ENCODE measurements at regions of chr2 and their contacts with region 1.

Region 1: GRCh38 chr2:209423562-209424198 is at the start of gene MAP2:
- DNase-seq: peak; percentile 91
- ATAC-seq: peak; percentile 96
- H3K4me3 ChIP-seq: peak within 1 kb of the TSS; percentile 50 to 73 (median 67)
- H3K4me3 Mint-ChIP-seq: peak within 1 kb of the TSS; percentile 93
- H3K27ac ChIP-seq: peak within 1 kb of the TSS in 1 of 2 donors; percentile 46
- H3K27ac Mint-ChIP-seq: peak within 1 kb of the TSS; percentile 64
- H3K4me1 ChIP-seq: peaks cover 17 to 18% of the 10 kb centered on the region in 2 donors
- H3K4me1 Mint-ChIP-seq: peaks cover 23% of the 10 kb centered on the region
- H3K27me3 ChIP-seq: peaks cover 0 to 3% (median 0%) of the 10 kb centered on the region in 4 experiments
- H3K27me3 Mint-ChIP-seq: peaks cover 21% of the 10 kb centered on the region
- CTCF ChIP-seq: peak; percentile 91
- total RNA-seq, gene MAP2: 3.0 and 3.1 TPM in 2 replicates

Region 2: DNA sequence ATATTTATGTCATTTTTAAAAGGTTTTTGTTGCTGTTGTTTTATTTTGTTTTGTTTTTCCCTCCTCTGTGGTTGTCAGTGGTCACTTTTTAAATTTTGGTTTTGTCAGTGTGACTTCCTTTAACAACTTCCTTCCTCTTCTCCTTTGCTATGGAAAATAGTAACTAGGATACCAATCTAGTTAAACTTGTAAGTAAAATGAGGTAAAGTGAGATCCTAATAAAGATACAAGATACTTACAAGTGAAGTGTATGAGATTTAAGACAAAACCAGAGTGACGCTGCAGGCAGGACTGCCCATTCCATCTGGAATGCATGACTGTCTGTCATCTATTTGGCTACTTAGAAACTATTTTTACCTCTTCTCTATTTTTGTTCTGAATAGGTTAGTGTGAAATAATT is 1924.6 kb before region 1 on chr2:
- CTCF ChIA-PET with region 1: no interaction called
- POLR2A ChIA-PET with region 1: no interaction called
- intact Hi-C with region 1: no loop called
- DNase-seq: no peak
- ATAC-seq: no peak
- H3K4me3 ChIP-seq: no peak overlapping the region
- H3K4me3 Mint-ChIP-seq: no peak overlapping the region
- H3K27ac ChIP-seq: no peak overlapping the region
- H3K27ac Mint-ChIP-seq: peak overlapping the region; percentile 33
- H3K4me1 ChIP-seq: peaks cover 51 to 52% of the 10 kb centered on the region in 2 donors
- H3K4me1 Mint-ChIP-seq: peaks cover 52% of the 10 kb centered on the region
- H3K27me3 ChIP-seq: no peaks in the 10 kb centered on the region
- H3K27me3 Mint-ChIP-seq: no peaks in the 10 kb centered on the region
- CTCF ChIP-seq: no peak

Region 3: GRCh38 chr2:209334198-209335017 is 89.3 kb before region 1 on chr2:
- CTCF ChIA-PET with region 1: interaction called, 32 read pairs
- POLR2A ChIA-PET with region 1: no interaction called
- intact Hi-C with region 1: loop called (anchors 5 kb)
- DNase-seq: peak; percentile 63
- ATAC-seq: peak; percentile 56
- H3K4me3 ChIP-seq: no peak overlapping the region
- H3K4me3 Mint-ChIP-seq: no peak overlapping the region
- H3K27ac ChIP-seq: no peak overlapping the region
- H3K27ac Mint-ChIP-seq: no peak overlapping the region
- H3K4me1 ChIP-seq: peaks cover 0 to 3% of the 10 kb centered on the region in 2 donors
- H3K4me1 Mint-ChIP-seq: no peaks in the 10 kb centered on the region
- H3K27me3 ChIP-seq: no peaks in the 10 kb centered on the region
- H3K27me3 Mint-ChIP-seq: peaks cover 4% of the 10 kb centered on the region
- CTCF ChIP-seq: peak; percentile 93

Region 4: GRCh38 chr2:209476367-209477191 is 52.9 kb after region 1 on chr2:
- CTCF ChIA-PET with region 1: no interaction called
- POLR2A ChIA-PET with region 1: no interaction called
- intact Hi-C with region 1: no loop called
- DNase-seq: no peak
- ATAC-seq: no peak
- H3K4me3 ChIP-seq: no peak overlapping the region
- H3K4me3 Mint-ChIP-seq: no peak overlapping the region
- H3K27ac ChIP-seq: no peak overlapping the region
- H3K27ac Mint-ChIP-seq: no peak overlapping the region
- H3K4me1 ChIP-seq: no peaks in the 10 kb centered on the region
- H3K4me1 Mint-ChIP-seq: no peaks in the 10 kb centered on the region
- H3K27me3 ChIP-seq: no peaks in the 10 kb centered on the region
- H3K27me3 Mint-ChIP-seq: peaks cover 3% of the 10 kb centered on the region
- CTCF ChIP-seq: no peak

Region 5: DNA sequence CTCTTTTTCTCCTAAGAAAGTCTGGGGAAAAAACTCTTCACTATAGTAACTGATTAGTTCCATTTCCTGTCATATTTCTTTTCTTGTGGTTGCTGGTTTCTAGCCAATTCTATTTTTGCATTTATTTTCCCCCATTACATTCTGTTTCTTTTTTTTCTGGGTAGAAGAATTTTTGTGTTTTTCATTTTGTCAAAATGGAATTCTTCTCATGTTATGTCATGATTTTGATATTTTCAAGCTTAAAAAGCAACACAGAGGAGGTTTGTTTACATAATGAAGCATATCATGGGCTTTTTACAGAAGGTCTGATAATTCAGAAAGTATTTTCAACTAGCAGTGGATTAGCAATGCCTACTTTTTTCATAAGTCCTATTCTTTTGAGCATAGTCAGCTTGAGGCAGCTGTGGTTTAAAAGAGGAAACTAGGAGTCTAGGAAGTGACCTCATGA is 102.2 kb after region 1 on chr2:
- CTCF ChIA-PET with region 1: interaction called, 11 read pairs
- POLR2A ChIA-PET with region 1: no interaction called
- intact Hi-C with region 1: loop called (anchors 2 kb)
- DNase-seq: peak; percentile 19
- ATAC-seq: peak; percentile 21
- H3K4me3 ChIP-seq: peak overlapping the region in 4 of 5 experiments; percentile 28 to 59 (median 42)
- H3K4me3 Mint-ChIP-seq: peak overlapping the region; percentile 74
- H3K27ac ChIP-seq: peak overlapping the region; percentile 67 to 76
- H3K27ac Mint-ChIP-seq: peak overlapping the region; percentile 80
- H3K4me1 ChIP-seq: peaks cover 37 to 42% of the 10 kb centered on the region in 2 donors
- H3K4me1 Mint-ChIP-seq: peaks cover 41% of the 10 kb centered on the region
- H3K27me3 ChIP-seq: no peaks in the 10 kb centered on the region
- H3K27me3 Mint-ChIP-seq: no peaks in the 10 kb centered on the region
- CTCF ChIP-seq: no peak

Region 6: DNA sequence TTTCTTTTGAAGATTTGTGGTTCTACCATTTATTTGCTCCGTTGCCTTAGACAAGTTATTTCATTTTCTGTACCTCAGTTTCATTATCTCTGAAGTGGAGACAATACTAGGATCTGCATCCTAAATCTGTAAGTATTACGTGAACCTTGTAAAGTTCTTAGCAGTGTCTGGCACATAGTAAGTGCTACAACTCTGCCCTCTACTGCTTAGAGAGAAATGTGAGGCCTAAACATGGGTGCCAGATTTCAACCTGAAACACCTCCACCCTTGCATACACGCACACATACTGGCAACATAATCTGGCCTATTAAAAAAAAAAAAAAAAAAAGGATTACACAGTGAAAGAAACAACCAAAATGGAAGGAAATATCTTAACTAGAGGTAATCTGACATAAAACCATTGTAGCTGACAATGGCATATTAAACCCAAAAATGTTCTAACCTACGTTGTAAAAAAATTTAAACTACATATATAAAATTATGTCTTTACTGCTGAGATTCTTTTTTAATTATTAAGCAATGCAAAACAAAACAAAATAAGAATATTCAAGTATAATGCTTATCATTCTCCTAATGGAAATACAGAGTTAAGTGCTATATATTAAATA is 132.8 kb after region 1 on chr2:
- CTCF ChIA-PET with region 1: interaction called, 14 read pairs
- POLR2A ChIA-PET with region 1: no interaction called
- intact Hi-C with region 1: loop called (anchors 5 kb)
- DNase-seq: peak; percentile 50
- ATAC-seq: no peak
- H3K4me3 ChIP-seq: no peak overlapping the region
- H3K4me3 Mint-ChIP-seq: no peak overlapping the region
- H3K27ac ChIP-seq: no peak overlapping the region
- H3K27ac Mint-ChIP-seq: no peak overlapping the region
- H3K4me1 ChIP-seq: no peaks in the 10 kb centered on the region
- H3K4me1 Mint-ChIP-seq: peaks cover 5% of the 10 kb centered on the region
- H3K27me3 ChIP-seq: no peaks in the 10 kb centered on the region
- H3K27me3 Mint-ChIP-seq: no peaks in the 10 kb centered on the region
- CTCF ChIP-seq: peak; percentile 58

Region 7: GRCh38 chr2:209577376-209578357 is 154.0 kb after region 1 on chr2:
- CTCF ChIA-PET with region 1: interaction called, 10 read pairs
- POLR2A ChIA-PET with region 1: no interaction called
- intact Hi-C with region 1: loop called (anchors 2 kb)
- DNase-seq: peak; percentile 30
- ATAC-seq: no peak
- H3K4me3 ChIP-seq: no peak overlapping the region
- H3K4me3 Mint-ChIP-seq: no peak overlapping the region
- H3K27ac ChIP-seq: no peak overlapping the region
- H3K27ac Mint-ChIP-seq: no peak overlapping the region
- H3K4me1 ChIP-seq: peaks cover 6% of the 10 kb centered on the region in 2 donors
- H3K4me1 Mint-ChIP-seq: peaks cover 11% of the 10 kb centered on the region
- H3K27me3 ChIP-seq: no peaks in the 10 kb centered on the region
- H3K27me3 Mint-ChIP-seq: no peaks in the 10 kb centered on the region
- CTCF ChIP-seq: peak; percentile 76

Region 8: DNA sequence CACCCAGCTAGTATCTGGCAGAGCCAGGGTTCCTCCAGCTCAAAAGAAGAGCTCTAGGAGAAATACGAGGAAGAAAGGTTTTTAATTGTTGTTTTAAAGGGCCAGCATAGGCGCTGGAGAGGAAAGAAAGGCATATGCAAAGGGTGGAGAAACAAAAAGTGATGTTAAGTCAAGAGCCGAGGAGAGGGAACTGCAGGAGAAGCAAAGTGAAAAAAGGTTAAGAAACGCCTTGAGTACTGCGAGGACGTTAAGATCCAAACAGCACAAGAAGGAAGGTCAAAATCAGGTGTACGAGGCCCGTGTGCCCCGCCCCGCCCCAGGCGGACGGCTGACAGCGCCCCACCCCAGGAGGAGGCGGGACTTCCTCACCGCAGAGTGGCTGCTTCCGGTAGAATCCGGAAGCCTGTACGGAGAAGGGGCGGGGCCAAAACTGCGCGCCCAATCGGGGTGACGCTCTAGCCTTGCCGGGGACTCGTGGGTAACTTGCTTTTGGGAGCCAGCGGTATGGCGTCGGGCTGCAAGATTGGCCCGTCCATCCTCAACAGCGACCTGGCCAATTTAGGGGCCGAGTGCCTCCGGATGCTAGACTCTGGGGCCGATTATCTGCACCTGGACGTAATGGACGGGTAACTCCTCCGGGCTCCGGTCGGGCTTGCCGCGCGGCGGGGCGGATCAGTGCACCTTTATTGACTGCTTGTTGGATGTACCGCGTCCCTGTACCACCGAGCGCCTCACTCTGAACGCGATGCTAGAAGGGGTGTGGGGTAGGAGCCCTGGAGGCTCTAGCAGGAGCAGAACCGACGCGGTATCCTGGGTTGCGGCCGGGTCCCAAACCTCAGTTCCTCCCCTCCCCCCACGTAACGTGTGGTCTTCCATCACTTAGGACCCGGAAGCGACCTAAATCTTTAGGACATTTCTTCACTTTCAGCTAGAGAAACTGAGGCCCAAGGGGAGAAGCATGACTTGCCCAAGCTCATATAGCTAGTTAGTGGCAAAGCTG is 578.8 kb after region 1 on chr2 and contains the start of gene RPE:
- CTCF ChIA-PET with region 1: no interaction called
- POLR2A ChIA-PET with region 1: no interaction called
- intact Hi-C with region 1: loop called (anchors 1 kb)
- DNase-seq: peak; percentile 97
- ATAC-seq: peak; percentile 99
- H3K4me3 ChIP-seq: peak within 1 kb of the TSS; percentile 79 to 96 (median 93)
- H3K4me3 Mint-ChIP-seq: peak within 1 kb of the TSS; percentile 89
- H3K27ac ChIP-seq: peak within 1 kb of the TSS; percentile 68 to 88
- H3K27ac Mint-ChIP-seq: peak within 1 kb of the TSS; percentile 92
- H3K4me1 ChIP-seq: peaks cover 28 to 33% of the 10 kb centered on the region in 2 donors
- H3K4me1 Mint-ChIP-seq: peaks cover 45% of the 10 kb centered on the region
- H3K27me3 ChIP-seq: no peaks in the 10 kb centered on the region
- H3K27me3 Mint-ChIP-seq: peaks cover 3% of the 10 kb centered on the region
- CTCF ChIP-seq: no peak
- total RNA-seq, gene RPE: 47.8 and 50.7 TPM in 2 replicates

Region 9: GRCh38 chr2:210171309-210172203 is 747.9 kb after region 1 on chr2 and contains the start of gene KANSL1L:
- CTCF ChIA-PET with region 1: interaction called, 8 read pairs
- POLR2A ChIA-PET with region 1: no interaction called
- intact Hi-C with region 1: loop called (anchors 2 kb)
- DNase-seq: peak; percentile 96
- ATAC-seq: peak; percentile 85
- H3K4me3 ChIP-seq: peak within 1 kb of the TSS; percentile 75 to 96 (median 87)
- H3K4me3 Mint-ChIP-seq: peak within 1 kb of the TSS; percentile 92
- H3K27ac ChIP-seq: peak within 1 kb of the TSS; percentile 91 to 93
- H3K27ac Mint-ChIP-seq: peak within 1 kb of the TSS; percentile 97
- H3K4me1 ChIP-seq: peaks cover 13 to 18% of the 10 kb centered on the region in 2 donors
- H3K4me1 Mint-ChIP-seq: peaks cover 17% of the 10 kb centered on the region
- H3K27me3 ChIP-seq: peaks cover 0 to 5% (median 0%) of the 10 kb centered on the region in 4 experiments
- H3K27me3 Mint-ChIP-seq: peaks cover 7% of the 10 kb centered on the region
- CTCF ChIP-seq: no peak
- total RNA-seq, gene KANSL1L: 21.1 and 25.5 TPM in 2 replicates